ENCODE measurements at regions of chr1 and their contacts with region 1.

Region 1: DNA sequence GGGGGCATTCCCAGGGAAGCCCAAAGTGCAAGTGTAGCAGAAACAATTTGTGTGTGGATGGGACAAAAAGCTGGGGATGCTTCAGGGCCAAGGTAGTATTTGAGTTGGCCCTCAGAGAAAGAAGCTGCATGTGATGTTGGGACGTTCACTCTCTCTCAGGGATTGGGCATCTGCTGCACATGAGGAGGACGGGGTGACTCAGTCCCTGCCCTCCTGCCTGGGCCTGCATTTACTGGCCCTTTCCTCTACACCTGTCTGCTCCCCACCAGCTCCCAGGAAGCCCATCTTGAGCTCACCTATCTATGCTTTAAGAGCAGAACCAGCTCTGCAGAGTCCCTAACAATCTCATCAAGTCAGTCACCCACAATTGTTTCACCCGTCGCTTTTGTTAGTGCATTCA is 23.5 kb upstream of the MPZL1 start:
- DNase-seq: no peak
- H3K4me3 ChIP-seq: no peak overlapping the region
- H3K27me3 ChIP-seq: peaks cover 3% of the 10 kb centered on the region
- CTCF ChIP-seq: no peak

Region 2: GRCh38 chr1:167800251-167800650 is 101.9 kb after region 1 on chr1:
- CTCF ChIA-PET with region 1: no interaction called
- POLR2A ChIA-PET with region 1: interaction called, 15 read pairs
- DNase-seq: no peak
- H3K4me3 ChIP-seq: no peak overlapping the region
- H3K27me3 ChIP-seq: no peaks in the 10 kb centered on the region
- CTCF ChIP-seq: no peak

Region 3: GRCh38 chr1:167819849-167820683 is 121.8 kb after region 1 on chr1:
- CTCF ChIA-PET with region 1: no interaction called
- POLR2A ChIA-PET with region 1: no interaction called
- DNase-seq: peak; percentile 92
- H3K4me3 ChIP-seq: peak overlapping the region; percentile 17
- H3K27me3 ChIP-seq: no peaks in the 10 kb centered on the region
- CTCF ChIP-seq: no peak